Gastrocnemius medialis (tissue), 4 donors: ENCODE measurements at regions of chr6 and their contacts with region 1.

Region 1: GRCh38 chr6:108947114-108947854 is 99.1 kb downstream of the ARMC2 start:
- DNase-seq: no peak
- ATAC-seq: peak in 1 of 2 donors; percentile 14
- H3K4me3 ChIP-seq: no peak overlapping the region
- H3K27ac ChIP-seq: peak overlapping the region; percentile 86 to 91 (median 88)
- H3K4me1 ChIP-seq: peaks cover 66 to 68% of the 10 kb centered on the region in 2 donors
- H3K27me3 ChIP-seq: no peaks in the 10 kb centered on the region
- CTCF ChIP-seq: no peak
- POLR2A ChIP-seq: peak in 1 of 2 donors; percentile 23

Region 2: DNA sequence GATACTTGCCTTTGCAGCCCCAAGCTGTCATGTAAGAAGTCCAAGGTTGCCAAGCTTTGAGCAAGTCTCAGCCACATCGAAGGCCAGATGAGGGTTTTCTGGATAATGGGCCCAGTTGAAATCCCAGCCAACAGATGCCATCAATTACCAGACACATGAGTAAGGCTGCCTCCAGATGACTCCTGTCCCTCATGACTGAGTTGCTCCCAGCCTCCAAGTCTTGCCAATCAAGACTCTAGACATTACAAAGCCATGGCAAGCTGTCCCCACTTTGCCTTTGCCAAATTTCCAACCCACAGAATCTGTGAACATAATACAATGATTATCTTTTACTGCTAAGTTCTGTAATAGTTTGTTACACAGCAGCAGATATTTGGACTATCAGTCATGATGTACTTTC is 175.9 kb before region 1 on chr6:
- in situ Hi-C with region 1: no loop called
- intact Hi-C with region 1: no loop called
- DNase-seq: no peak
- ATAC-seq: peak; percentile 39 to 71
- H3K4me3 ChIP-seq: no peak overlapping the region
- H3K27ac ChIP-seq: peak overlapping the region in 2 of 4 donors; percentile 13 to 55
- H3K4me1 ChIP-seq: peaks cover 0 to 5% of the 10 kb centered on the region in 2 donors
- H3K27me3 ChIP-seq: no peaks in the 10 kb centered on the region
- CTCF ChIP-seq: no peak
- POLR2A ChIP-seq: no peak

Region 3: GRCh38 chr6:108883172-108883571 is 64.1 kb before region 1 on chr6:
- in situ Hi-C with region 1: no loop called
- intact Hi-C with region 1: no loop called
- DNase-seq: no peak
- ATAC-seq: no peak
- H3K4me3 ChIP-seq: no peak overlapping the region
- H3K27ac ChIP-seq: no peak overlapping the region
- H3K4me1 ChIP-seq: peaks cover 0 to under 1% of the 10 kb centered on the region in 2 donors
- H3K27me3 ChIP-seq: no peaks in the 10 kb centered on the region
- CTCF ChIP-seq: no peak
- POLR2A ChIP-seq: no peak

Region 4: DNA sequence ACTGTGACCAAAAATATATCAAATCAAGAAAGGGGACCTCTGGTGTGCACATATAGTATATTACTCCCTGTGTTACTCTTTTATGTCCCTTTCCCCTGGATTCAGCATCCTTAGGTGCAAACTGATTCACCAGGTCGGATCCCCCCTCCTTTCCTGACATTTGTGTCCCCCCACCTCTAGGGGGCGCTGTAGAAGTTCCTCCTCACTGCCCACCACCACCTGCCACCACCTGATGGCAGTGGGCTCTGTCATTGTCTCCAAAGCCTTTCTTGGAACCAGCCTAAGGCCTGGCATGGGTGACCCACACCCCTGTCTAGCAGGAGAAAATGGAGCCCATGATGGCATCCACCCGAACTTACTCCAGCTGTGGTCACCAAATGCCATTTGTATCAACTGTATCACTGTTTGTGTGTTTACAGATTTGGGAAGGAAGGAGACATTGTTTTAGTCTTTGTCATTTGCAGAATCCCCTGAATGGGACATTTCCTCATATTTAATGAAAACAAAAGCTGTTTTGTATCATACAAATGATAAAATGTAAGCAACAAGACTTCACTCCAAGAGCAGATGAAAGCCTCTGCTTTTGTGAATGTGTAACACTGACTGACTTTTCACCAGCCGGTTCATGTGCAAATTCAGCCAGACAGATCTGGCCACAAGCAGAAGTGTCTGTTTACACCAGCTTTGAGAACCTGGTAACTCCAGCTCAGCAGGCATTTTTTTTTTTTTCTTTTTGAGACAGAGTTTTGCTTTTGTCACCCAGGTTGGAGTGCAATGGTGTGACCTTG is 32.9 kb before region 1 on chr6:
- in situ Hi-C with region 1: no loop called
- intact Hi-C with region 1: no loop called
- DNase-seq: no peak
- ATAC-seq: peak in 1 of 2 donors; percentile 16
- H3K4me3 ChIP-seq: no peak overlapping the region
- H3K27ac ChIP-seq: no peak overlapping the region
- H3K4me1 ChIP-seq: no peaks in the 10 kb centered on the region
- H3K27me3 ChIP-seq: no peaks in the 10 kb centered on the region
- CTCF ChIP-seq: peak in 2 of 5 experiments; percentile 33 to 48
- POLR2A ChIP-seq: no peak

Region 5: DNA sequence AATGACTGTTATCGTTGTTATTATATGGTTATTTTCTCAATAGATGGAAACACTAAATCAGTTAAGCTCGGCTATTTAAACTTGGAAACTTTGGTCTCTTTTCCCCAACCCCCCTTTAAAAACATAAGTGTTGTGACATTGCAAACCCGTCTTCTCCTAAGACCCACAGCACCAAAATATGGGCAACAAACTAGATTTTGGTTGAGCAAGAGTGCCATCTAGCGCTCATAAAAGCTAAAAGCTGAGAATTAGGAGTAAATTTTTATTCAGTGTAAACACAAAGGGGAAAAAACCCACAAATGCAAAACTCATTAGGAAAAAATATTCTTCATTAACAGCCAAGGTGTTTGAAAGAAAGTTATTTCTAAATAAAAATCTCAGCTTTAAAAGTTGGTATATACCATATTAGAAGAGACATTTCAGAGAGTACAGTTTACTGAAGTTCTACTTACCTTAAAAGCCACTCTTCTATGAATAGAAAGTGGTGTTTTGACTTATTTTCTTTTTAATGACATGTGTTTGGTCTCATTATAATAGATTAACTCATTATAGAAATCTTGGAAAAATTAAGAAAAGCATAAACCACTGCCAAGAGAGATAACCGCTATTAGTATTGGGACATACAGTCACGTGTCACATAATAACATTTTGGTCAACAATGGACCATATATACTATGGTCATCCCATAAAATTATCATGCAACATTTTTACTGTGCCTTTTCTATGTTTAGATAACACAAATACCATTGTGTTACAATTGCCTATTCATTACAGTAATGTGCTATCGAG is 126.3 kb after region 1 on chr6:
- in situ Hi-C with region 1: loop called in 3 of 4 experiments (anchors 10 to 25 kb)
- intact Hi-C with region 1: loop called (anchors 5 kb)
- DNase-seq: peak in 1 of 2 donors; percentile 34
- ATAC-seq: peak; percentile 66 to 84
- H3K4me3 ChIP-seq: peak overlapping the region in 1 of 4 donors; percentile 4
- H3K27ac ChIP-seq: peak overlapping the region; percentile 37 to 98 (median 57)
- H3K4me1 ChIP-seq: peaks cover 82 to 94% of the 10 kb centered on the region in 2 donors
- H3K27me3 ChIP-seq: no peaks in the 10 kb centered on the region
- CTCF ChIP-seq: peak; percentile 61 to 73 (median 67)
- POLR2A ChIP-seq: no peak

Region 6: DNA sequence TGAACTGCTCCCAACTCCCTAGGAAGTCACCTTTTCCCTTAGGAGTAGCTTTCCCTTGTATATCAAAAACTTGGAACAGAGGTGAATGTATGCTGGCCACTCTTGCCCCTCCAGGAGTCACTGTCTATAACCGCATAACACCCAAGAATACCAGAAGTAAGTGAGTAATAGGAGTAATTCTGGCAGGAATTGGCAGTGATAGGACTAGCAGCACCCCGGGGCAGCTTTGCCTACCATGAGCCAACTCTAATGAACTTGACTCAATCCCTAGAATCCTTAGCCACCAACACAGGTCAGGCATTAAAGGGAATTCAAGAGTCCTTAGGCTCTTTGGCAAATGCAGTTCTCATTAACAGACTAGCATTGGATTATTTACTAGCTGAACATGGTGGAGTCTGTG is 463.8 kb after region 1 on chr6:
- in situ Hi-C with region 1: no loop called
- intact Hi-C with region 1: no loop called
- DNase-seq: no peak
- ATAC-seq: no peak
- H3K4me3 ChIP-seq: no peak overlapping the region
- H3K27ac ChIP-seq: no peak overlapping the region
- H3K4me1 ChIP-seq: no peaks in the 10 kb centered on the region
- H3K27me3 ChIP-seq: no peaks in the 10 kb centered on the region
- CTCF ChIP-seq: no peak
- POLR2A ChIP-seq: no peak